SK-N-SH (cell line): ENCODE measurements at regions of chr7 and their contacts with region 1.

Region 1: DNA sequence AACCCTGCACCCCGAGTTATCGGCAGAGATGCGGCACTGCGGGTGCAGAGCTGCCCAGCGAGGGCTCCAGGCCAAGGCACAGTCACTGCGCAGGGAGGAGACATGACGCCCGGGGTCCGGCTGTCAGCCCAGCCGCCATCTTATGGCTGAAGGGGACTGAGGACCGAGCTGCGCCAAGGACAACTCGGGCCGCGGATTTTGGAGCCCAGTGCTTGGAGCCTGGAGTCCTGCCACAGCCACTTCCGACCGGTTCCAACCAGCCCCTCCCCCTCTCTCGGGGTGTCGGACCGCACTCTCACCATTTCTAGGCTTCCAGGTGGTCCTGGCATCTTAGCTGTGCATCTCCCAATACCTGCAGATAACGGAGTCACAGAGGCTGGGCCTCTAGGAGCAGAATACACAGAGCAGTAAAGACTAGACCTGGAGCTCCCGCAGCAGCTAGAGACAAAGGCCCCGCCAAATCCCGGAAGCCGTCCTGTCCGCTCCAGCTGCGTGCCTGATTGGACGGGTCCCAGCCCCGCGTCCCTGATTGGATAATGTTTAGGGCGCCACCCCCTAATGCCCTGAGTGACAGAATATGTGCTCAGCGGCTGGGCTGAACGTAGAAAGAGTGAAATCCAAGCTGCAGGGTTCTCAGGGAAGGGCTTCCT is at the start of gene ZNF680:
- DNase-seq: peak; percentile 94
- H3K4me3 ChIP-seq: peak within 1 kb of the TSS; percentile 70 to 85
- H3K27ac ChIP-seq: peak within 1 kb of the TSS; percentile 74 to 83
- H3K4me1 ChIP-seq: peaks cover 5 to 6% of the 10 kb centered on the region in 2 experiments; a peak in 2 of 4 replicates
- H3K27me3 ChIP-seq: no peaks in the 10 kb centered on the region
- CTCF ChIP-seq: no peak
- EP300 ChIP-seq: no peak
- RAD21 ChIP-seq: no peak
- polyA plus RNA-seq, gene ZNF680: 1.6 and 2.8 TPM in 2 replicates

Region 2: GRCh38 chr7:64574540-64575126 is 11.9 kb after region 1 on chr7:
- CTCF ChIA-PET with region 1: no interaction called
- POLR2A ChIA-PET with region 1: interaction called, 31 read pairs
- DNase-seq: peak; percentile 93
- H3K4me3 ChIP-seq: peak overlapping the region; percentile 60
- H3K27ac ChIP-seq: peak overlapping the region in 1 of 2 experiments; percentile 51; a peak in 1 of 4 replicates
- H3K4me1 ChIP-seq: no peaks in the 10 kb centered on the region; a peak in 1 of 4 replicates
- H3K27me3 ChIP-seq: no peaks in the 10 kb centered on the region
- CTCF ChIP-seq: no peak
- EP300 ChIP-seq: no peak
- RAD21 ChIP-seq: no peak

Region 3: GRCh38 chr7:64768824-64769223 is 206.1 kb after region 1 on chr7:
- CTCF ChIA-PET with region 1: no interaction called
- POLR2A ChIA-PET with region 1: no interaction called
- DNase-seq: no peak
- H3K4me3 ChIP-seq: no peak overlapping the region
- H3K27ac ChIP-seq: no peak overlapping the region
- H3K4me1 ChIP-seq: no peaks in the 10 kb centered on the region
- H3K27me3 ChIP-seq: no peaks in the 10 kb centered on the region
- CTCF ChIP-seq: no peak
- EP300 ChIP-seq: no peak
- RAD21 ChIP-seq: no peak